ENCODE measurements at regions of chr6 and their contacts with region 1.

Region 1: GRCh38 chr6:40907198-40907704 is 131.8 kb downstream of the UNC5CL start:
- DNase-seq: peak; percentile 95
- ATAC-seq: peak; percentile 80
- H3K4me3 ChIP-seq: 0 out of 2 replicates have a peak overlapping the region, but pooled peaks have one; percentile 11
- H3K27ac ChIP-seq: peak overlapping the region; percentile 91
- H3K4me1 ChIP-seq: peaks cover 26% of the 10 kb centered on the region
- H3K27me3 ChIP-seq: no peaks in the 10 kb centered on the region
- CTCF ChIP-seq: no peak

Region 2: DNA sequence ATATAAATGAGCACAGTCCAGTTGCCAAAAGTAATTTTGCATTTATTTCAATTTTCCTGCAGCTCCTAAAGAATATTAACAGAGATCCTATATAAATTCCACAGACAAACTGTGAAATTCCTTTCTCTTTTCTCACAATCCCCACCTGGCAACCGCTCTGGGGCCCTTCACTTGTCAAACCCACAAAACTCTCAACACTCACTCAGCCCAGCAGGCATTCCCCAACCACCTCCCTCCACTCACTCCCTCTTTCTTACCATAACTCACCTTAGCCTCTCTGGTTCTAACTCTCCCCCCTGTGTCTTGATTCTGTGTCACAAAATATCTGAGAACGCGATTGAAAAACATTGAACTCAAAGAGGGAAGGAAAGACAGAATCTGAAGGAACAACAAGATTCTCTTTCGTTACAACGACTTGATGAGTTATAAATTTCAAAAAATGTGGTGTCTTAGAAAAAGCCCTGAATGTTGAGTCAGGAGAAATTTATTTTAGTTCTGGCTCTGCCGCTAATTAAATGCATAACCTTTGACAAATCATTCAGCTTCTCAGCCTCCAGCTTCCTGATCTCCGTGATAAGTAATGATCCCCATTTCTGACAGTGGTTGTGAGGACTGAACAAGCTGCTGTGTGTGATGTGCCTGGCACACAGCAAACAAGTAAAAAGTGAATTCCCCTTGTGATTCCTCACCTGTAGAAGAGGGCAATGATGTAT is 43.9 kb after region 1 on chr6:
- CTCF ChIA-PET with region 1: no interaction called
- POLR2A ChIA-PET with region 1: no interaction called
- intact Hi-C with region 1: loop called (anchors 2 kb)
- DNase-seq: peak; percentile 71
- ATAC-seq: peak; percentile 65
- H3K4me3 ChIP-seq: peak overlapping the region; percentile 28; the same call in 1 of the 2 replicates
- H3K27ac ChIP-seq: peak overlapping the region; percentile 38
- H3K4me1 ChIP-seq: peaks cover 40% of the 10 kb centered on the region
- H3K27me3 ChIP-seq: no peaks in the 10 kb centered on the region
- CTCF ChIP-seq: no peak

Region 3: DNA sequence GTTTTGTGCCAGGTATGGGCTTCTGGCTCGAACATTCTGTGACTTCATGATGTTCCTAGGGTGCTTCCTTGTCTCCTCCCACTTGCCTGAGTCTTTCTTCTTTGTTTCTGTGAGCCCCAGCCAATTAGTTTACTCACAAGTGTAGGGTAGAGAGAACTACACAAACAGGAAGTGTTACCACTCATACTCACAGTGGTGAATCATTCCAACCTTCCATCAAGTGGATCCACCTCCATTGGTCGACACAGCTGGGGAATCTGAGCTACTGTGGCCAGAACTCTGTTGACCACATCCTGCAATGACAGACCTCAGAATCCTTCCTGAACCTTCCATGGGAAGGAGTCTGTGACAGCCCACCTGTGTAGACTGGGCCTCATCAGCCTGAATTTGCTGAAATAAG is 55.0 kb after region 1 on chr6:
- CTCF ChIA-PET with region 1: no interaction called
- POLR2A ChIA-PET with region 1: no interaction called
- intact Hi-C with region 1: loop called (anchors 1 kb)
- DNase-seq: peak; percentile 95
- ATAC-seq: peak; percentile 88
- H3K4me3 ChIP-seq: no peak overlapping the region
- H3K27ac ChIP-seq: peak overlapping the region; percentile 78
- H3K4me1 ChIP-seq: peaks cover 44% of the 10 kb centered on the region
- H3K27me3 ChIP-seq: no peaks in the 10 kb centered on the region
- CTCF ChIP-seq: no peak

Region 4: GRCh38 chr6:41072676-41073623 is 165.7 kb after region 1 on chr6 and contains the start of gene NFYA:
- CTCF ChIA-PET with region 1: no interaction called
- POLR2A ChIA-PET with region 1: no interaction called
- intact Hi-C with region 1: loop called (anchors 2 kb)
- DNase-seq: peak; percentile 99
- ATAC-seq: peak; percentile 65
- H3K4me3 ChIP-seq: peak within 1 kb of the TSS; percentile 85
- H3K27ac ChIP-seq: peak within 1 kb of the TSS; percentile 96
- H3K4me1 ChIP-seq: peaks cover 46% of the 10 kb centered on the region
- H3K27me3 ChIP-seq: no peaks in the 10 kb centered on the region
- CTCF ChIP-seq: no peak
- total RNA-seq, gene NFYA: 31.7 and 32.9 TPM in 2 replicates